Activated T-helper 1 cell treated with anti-CD3 and anti-CD28 coated beads, Interleukin-12 subunit alpha, Interleukin-12 subunit beta, Interleukin-2, Interleukin-4 antibody, amounts not matched to agents 30 ng/mL and 10 ng/mL and 1 ng/mL, durations not matched to agents 14 hours and 24 hours and 36 hours (primary cell): ENCODE measurements at regions of chr11 and their contacts with region 1.

Region 1: GRCh38 chr11:123381817-123382554 is 48.1 kb upstream of the GRAMD1B start:
- DNase-seq: peak; percentile 70
- H3K4me3 Mint-ChIP-seq: peak overlapping the region; percentile 62
- H3K27ac Mint-ChIP-seq: peak overlapping the region; percentile 79
- H3K4me1 Mint-ChIP-seq: peaks cover 49% of the 10 kb centered on the region
- H3K27me3 Mint-ChIP-seq: no peaks in the 10 kb centered on the region

Region 2: DNA sequence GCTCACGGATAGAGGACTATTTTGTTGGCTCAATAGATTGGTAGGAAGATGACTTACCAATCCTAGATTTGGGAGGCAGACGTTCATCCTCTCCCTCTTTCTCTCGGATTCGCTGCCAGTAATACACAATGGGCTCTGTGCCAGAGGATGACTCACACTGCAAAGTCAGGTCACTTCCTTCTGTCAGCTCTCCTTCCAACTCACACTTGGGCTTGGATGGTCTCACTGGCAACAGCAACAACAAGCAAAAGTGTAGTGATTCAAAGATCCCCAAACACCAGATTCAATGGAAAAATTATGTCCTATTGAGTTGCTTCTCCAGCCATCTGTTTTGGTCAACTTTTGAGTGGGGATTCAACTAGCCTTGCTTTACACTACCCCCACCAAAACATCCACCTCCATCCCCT is 298.4 kb before region 1 on chr11:
- intact Hi-C with region 1: loop called (anchors 2 kb)
- DNase-seq: peak; percentile 70
- H3K4me3 Mint-ChIP-seq: peak overlapping the region; percentile 55
- H3K27ac Mint-ChIP-seq: peak overlapping the region; percentile 79
- H3K4me1 Mint-ChIP-seq: peaks cover 50% of the 10 kb centered on the region
- H3K27me3 Mint-ChIP-seq: no peaks in the 10 kb centered on the region

Region 3: DNA sequence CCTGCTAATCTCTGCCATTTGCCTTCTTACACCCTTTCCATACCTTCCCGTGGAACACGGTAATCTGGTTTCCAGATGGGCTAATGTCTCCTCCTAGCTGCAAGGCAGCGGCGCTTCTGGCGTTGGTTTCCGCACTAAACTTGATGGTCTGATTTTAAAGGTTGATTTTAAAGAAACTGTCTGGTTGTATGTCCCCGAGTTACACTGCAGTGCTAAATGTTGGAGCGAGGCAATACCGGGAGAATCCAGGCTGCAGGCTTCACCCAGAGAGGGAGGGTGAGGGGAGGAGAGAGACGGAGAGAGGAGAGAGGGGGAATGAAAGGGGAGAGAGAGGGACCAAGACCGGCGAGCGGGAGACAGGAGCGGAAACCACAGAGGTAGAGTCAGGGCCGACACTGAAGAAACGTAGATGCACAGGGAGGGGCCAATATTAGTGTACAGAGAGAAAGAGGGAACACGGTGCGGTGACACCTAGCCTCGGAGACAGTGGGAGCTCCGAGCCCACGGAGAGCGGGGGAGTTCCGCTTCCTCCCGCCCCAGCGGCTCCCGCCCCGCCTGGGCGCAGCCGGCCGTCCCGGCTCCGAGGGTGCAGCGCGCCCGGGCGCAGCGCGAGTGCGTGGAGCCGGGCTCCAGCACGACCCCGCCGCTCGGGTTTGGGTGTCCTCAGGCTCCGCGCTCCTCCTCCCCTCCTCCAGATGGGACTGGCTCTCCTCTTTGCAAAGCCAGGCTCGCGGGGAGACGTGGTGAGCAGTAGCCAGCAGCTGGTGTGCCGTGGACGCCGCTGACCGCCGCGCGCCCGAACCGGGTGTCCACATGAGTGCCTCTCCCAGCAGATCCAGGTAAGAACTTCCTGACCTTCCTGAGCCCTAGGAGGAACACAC is 23.8 kb before region 1 on chr11:
- intact Hi-C with region 1: loop called (anchors 1 kb)
- DNase-seq: peak; percentile 53
- H3K4me3 Mint-ChIP-seq: peak overlapping the region; percentile 99
- H3K27ac Mint-ChIP-seq: peak overlapping the region; percentile 97
- H3K4me1 Mint-ChIP-seq: peaks cover 77% of the 10 kb centered on the region
- H3K27me3 Mint-ChIP-seq: no peaks in the 10 kb centered on the region

Region 4: DNA sequence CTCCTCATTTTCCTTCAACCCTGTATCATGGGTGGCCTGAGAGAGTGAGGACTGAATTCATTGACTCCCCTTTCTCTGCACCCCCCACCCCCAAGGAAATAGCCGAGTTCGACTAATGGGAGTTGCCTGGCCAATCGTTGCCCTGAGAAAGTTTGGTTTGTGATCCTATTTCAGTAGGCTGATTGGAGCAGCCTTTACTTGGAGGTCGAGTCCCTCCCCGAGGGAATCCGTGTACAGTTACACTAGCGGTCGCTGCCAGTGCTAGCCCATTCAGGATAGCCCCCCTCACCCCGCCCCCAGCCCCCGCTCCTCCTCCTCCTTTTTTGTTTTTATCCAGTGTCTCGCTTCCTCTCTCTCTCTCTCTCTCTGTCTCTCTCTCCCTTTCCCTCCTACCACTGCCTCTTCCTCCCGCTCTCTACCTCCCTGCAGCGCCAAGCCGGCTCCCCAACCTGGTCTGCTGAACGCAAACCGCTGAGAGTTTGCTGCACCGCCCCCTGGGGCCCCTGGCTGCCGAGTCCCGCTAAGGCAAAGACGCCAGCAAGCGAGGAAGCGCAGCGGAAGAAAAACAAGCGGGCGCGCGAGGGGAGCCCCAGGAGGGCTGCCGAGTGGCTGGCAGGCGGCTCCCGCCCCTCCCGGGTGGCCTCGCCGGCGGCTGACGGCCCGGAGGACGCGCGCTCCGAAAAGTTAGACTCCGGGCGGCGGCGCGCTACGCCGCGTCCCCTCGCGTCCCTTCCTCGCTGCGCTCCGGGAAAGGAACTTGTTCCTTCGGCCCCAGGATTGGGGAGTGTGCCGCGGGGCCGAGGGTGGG is 48.1 kb after region 1 on chr11 and contains the start of gene GRAMD1B:
- intact Hi-C with region 1: loop called (anchors 1 kb)
- DNase-seq: peak; percentile 78
- H3K4me3 Mint-ChIP-seq: peak within 1 kb of the TSS; percentile 91
- H3K27ac Mint-ChIP-seq: peak within 1 kb of the TSS; percentile 93
- H3K4me1 Mint-ChIP-seq: peaks cover 76% of the 10 kb centered on the region
- H3K27me3 Mint-ChIP-seq: no peaks in the 10 kb centered on the region
- total RNA-seq, gene GRAMD1B: 154 and 155 TPM in 2 replicates

Region 5: GRCh38 chr11:123478352-123478987 is 96.5 kb after region 1 on chr11:
- intact Hi-C with region 1: loop called (anchors 1 kb)
- DNase-seq: peak; percentile 9
- H3K4me3 Mint-ChIP-seq: peak overlapping the region; percentile 32
- H3K27ac Mint-ChIP-seq: peak overlapping the region; percentile 70
- H3K4me1 Mint-ChIP-seq: peaks cover 78% of the 10 kb centered on the region
- H3K27me3 Mint-ChIP-seq: no peaks in the 10 kb centered on the region